ENCODE measurements at regions of chr7 and their contacts with region 1.

Region 1: DNA sequence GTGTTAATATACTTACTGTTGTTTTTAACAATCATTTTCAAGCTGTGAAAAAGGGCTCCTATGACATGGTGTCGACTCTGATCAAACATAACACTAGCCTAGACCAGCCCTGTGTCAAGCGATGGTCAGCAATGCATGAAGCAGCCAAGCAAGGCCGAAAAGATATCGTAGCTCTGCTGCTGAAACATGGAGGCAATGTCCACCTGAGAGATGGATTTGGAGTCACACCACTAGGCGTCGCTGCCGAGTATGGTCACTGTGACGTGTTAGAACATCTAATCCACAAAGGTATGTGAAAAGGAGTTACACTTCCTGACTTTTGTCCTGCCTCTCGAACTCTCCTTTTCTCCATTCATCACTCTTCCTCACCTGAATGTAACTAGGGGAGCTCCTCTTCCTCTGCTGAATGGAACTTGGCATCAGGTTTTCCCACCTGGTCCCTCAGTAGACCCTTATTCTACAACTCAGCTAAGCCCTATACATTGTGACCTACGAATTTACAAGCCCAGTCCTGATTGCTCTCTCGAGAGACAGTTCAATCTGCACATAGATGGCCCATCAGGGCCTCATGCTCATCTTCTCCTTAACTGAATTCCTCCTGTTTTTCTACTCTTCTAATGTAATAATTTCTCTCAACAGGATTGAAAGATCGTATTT is 23.0 kb downstream of the ASB15 start:
- DNase-seq: peak; percentile 80
- ATAC-seq: peak; percentile 78
- H3K4me3 Mint-ChIP-seq: no peak overlapping the region
- H3K27ac Mint-ChIP-seq: no peak overlapping the region
- H3K4me1 Mint-ChIP-seq: no peaks in the 10 kb centered on the region
- H3K27me3 Mint-ChIP-seq: peaks cover 3% of the 10 kb centered on the region

Region 2: GRCh38 chr7:123355576-123356195 is 269.0 kb before region 1 on chr7:
- CTCF ChIA-PET with region 1: no interaction called
- POLR2A ChIA-PET with region 1: no interaction called
- DNase-seq: no peak
- ATAC-seq: no peak
- H3K4me3 Mint-ChIP-seq: no peak overlapping the region
- H3K27ac Mint-ChIP-seq: no peak overlapping the region
- H3K4me1 Mint-ChIP-seq: no peaks in the 10 kb centered on the region
- H3K27me3 Mint-ChIP-seq: no peaks in the 10 kb centered on the region

Region 3: GRCh38 chr7:123635551-123636359 is 11.1 kb after region 1 on chr7:
- CTCF ChIA-PET with region 1: interaction called, 16 read pairs
- POLR2A ChIA-PET with region 1: no interaction called
- DNase-seq: no peak
- ATAC-seq: no peak
- H3K4me3 Mint-ChIP-seq: no peak overlapping the region
- H3K27ac Mint-ChIP-seq: no peak overlapping the region
- H3K4me1 Mint-ChIP-seq: no peaks in the 10 kb centered on the region
- H3K27me3 Mint-ChIP-seq: peaks cover 18% of the 10 kb centered on the region

Region 4: DNA sequence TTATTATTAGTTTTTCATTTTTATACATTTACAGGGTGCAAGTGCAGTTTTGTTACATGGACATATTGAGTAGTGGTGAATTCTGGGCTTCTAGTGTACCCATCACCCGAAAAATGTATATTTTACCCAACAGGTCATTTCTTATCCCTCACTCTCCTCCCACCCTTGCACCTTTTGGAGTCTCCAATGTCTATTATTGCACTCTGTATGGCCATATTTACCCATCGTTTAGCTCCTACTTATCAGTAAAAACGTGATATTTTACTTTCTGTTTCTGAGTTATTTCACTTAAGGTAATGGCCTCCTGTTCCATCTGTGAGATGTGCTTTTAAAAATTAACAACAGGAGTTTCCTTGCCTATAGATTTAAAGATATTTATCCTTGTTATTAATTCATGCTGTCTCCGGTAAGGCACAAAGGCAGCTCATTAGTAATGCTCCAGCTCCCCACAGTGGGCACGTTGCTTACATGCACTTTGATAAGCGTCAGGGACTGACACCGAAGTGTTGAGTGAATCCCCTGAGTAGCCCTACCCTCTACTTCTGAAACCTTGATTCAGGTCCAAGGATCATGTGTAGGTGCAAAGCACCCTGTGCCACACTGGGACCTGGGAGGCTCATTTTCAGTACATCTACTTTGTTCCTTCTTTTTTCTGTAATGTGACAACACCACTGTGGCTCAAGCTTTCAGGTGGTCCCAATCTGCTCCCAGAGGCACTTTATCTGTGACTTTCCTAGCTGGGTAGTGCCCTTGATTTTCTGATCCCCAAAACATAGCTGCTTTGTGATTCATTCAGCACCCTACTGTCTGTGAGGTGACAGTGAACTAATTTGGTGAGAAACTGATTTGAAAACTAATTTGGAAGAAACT is 247.6 kb after region 1 on chr7:
- CTCF ChIA-PET with region 1: interaction called, 16 read pairs
- POLR2A ChIA-PET with region 1: no interaction called
- DNase-seq: peak; percentile 50
- ATAC-seq: peak; percentile 84
- H3K4me3 Mint-ChIP-seq: no peak overlapping the region
- H3K27ac Mint-ChIP-seq: no peak overlapping the region
- H3K4me1 Mint-ChIP-seq: no peaks in the 10 kb centered on the region
- H3K27me3 Mint-ChIP-seq: peaks cover 4% of the 10 kb centered on the region

Region 5: GRCh38 chr7:123979876-123980275 is 355.2 kb after region 1 on chr7:
- CTCF ChIA-PET with region 1: no interaction called
- POLR2A ChIA-PET with region 1: no interaction called
- DNase-seq: no peak
- ATAC-seq: no peak
- H3K4me3 Mint-ChIP-seq: no peak overlapping the region
- H3K27ac Mint-ChIP-seq: no peak overlapping the region
- H3K4me1 Mint-ChIP-seq: no peaks in the 10 kb centered on the region
- H3K27me3 Mint-ChIP-seq: no peaks in the 10 kb centered on the region